Heart left ventricle (tissue), 16 donors: ENCODE measurements at regions of chr1 and their contacts with region 1.

Region 1: DNA sequence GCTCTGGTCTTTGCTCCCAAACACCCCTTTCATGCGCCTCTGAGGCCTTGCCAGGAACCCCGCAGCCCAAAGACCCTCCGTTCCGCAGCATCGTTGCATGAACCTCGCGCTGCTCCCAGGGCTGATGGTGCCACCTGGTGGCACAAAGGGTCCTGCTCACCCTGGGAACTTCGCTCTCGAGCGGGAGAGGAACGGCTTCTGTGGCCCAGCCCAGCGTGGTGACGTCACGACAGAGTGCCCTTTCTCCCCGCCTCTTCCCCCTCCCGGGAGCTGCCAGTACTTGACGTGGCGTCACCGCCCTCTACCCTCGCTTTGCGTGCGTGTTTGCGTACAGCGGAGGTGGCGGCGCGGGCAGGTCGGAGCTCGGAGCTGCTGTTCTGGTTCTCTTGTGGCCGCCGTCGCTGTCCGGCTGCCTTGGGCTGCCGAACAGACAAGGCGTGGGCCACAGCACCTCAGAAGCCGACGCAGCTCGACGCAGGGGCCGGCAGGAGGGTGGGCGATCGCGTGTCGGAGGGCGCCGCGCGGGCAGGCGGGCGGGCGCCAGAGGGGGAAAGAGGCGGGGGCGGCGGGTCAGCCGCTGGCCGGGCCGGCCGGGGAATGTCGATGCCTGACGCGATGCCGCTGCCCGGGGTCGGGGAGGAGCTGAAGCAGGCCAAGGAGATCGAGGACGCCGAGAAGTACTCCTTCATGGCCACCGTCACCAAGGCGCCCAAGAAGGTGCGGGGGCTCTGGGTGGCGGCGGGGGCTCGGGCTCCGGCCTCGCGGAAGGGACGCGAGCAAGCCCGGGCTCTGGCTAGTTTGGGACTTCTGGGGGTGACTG is at the start of gene AHCYL1:
- DNase-seq: peak; percentile 100
- ATAC-seq: peak; percentile 96 to 98 (median 98)
- H3K4me3 ChIP-seq: peak within 1 kb of the TSS; percentile 61 to 97 (median 93)
- H3K27ac ChIP-seq: peak within 1 kb of the TSS; percentile 90 to 99 (median 98)
- H3K4me1 ChIP-seq: peaks cover 9 to 64% (median 55%) of the 10 kb centered on the region in 12 donors
- H3K27me3 ChIP-seq: no peaks in the 10 kb centered on the region
- CTCF ChIP-seq: peak; percentile 96 to 100 (median 98)
- POLR2A ChIP-seq: peak; percentile 95 to 98
- total RNA-seq, gene AHCYL1: 31.1 to 56.7 (median 48.7) TPM

Region 2: GRCh38 chr1:109643385-109644230 is 341.1 kb before region 1 on chr1:
- intact Hi-C with region 1: loop called in 9 of 10 experiments (anchors 5 to 10 kb)
- DNase-seq: peak; percentile 78 to 93 (median 85)
- ATAC-seq: peak; percentile 84 to 93 (median 88)
- H3K4me3 ChIP-seq: no peak overlapping the region
- H3K27ac ChIP-seq: peak overlapping the region in 1 of 12 donors; percentile 25
- H3K4me1 ChIP-seq: peaks cover 0 to 12% (median 7%) of the 10 kb centered on the region in 12 donors
- H3K27me3 ChIP-seq: no peaks in the 10 kb centered on the region
- CTCF ChIP-seq: peak; percentile 75 to 92 (median 84)
- POLR2A ChIP-seq: no peak

Region 3: GRCh38 chr1:109923131-109923945 is 61.3 kb before region 1 on chr1:
- intact Hi-C with region 1: loop called in 7 of 10 experiments (anchors 2 to 5 kb)
- DNase-seq: no peak
- ATAC-seq: no peak
- H3K4me3 ChIP-seq: peak overlapping the region in 1 of 12 donors; percentile 4
- H3K27ac ChIP-seq: peak overlapping the region in 2 of 12 donors; percentile 22 to 44
- H3K4me1 ChIP-seq: peaks cover 9 to 29% (median 18%) of the 10 kb centered on the region in 12 donors
- H3K27me3 ChIP-seq: no peaks in the 10 kb centered on the region
- CTCF ChIP-seq: peak; percentile 27 to 63 (median 42)
- POLR2A ChIP-seq: no peak

Region 4: GRCh38 chr1:110956586-110956985 is 971.9 kb after region 1 on chr1:
- intact Hi-C with region 1: no loop called
- DNase-seq: no peak
- ATAC-seq: no peak
- H3K4me3 ChIP-seq: no peak overlapping the region
- H3K27ac ChIP-seq: no peak overlapping the region
- H3K4me1 ChIP-seq: peaks cover 0 to 12% (median 0%) of the 10 kb centered on the region in 12 donors
- H3K27me3 ChIP-seq: no peaks in the 10 kb centered on the region
- CTCF ChIP-seq: no peak
- POLR2A ChIP-seq: no peak